Naive thymus-derived CD4-positive, alpha-beta T cell (primary cell): ENCODE measurements at regions of chr12 and their contacts with region 1.

Region 1: GRCh38 chr12:51217968-51218606 is at the start of gene POU6F1:
- DNase-seq: peak; percentile 64 to 81 (median 76)
- ATAC-seq: peak; percentile 88
- H3K4me3 ChIP-seq: peak within 1 kb of the TSS; percentile 90
- H3K4me3 Mint-ChIP-seq: peak within 1 kb of the TSS; percentile 82 to 98 (median 95)
- H3K27ac ChIP-seq: peak within 1 kb of the TSS; percentile 98
- H3K27ac Mint-ChIP-seq: peak within 1 kb of the TSS; percentile 83 to 98 (median 96)
- H3K4me1 ChIP-seq: peaks cover 10% of the 10 kb centered on the region in 2 donors
- H3K4me1 Mint-ChIP-seq: peaks cover 13 to 43% (median 33%) of the 10 kb centered on the region in 7 donors
- H3K27me3 ChIP-seq: no peaks in the 10 kb centered on the region
- H3K27me3 Mint-ChIP-seq: no peaks in the 10 kb centered on the region
- total RNA-seq, gene POU6F1: 5.1 to 85.5 (median 33.5) TPM

Region 2: DNA sequence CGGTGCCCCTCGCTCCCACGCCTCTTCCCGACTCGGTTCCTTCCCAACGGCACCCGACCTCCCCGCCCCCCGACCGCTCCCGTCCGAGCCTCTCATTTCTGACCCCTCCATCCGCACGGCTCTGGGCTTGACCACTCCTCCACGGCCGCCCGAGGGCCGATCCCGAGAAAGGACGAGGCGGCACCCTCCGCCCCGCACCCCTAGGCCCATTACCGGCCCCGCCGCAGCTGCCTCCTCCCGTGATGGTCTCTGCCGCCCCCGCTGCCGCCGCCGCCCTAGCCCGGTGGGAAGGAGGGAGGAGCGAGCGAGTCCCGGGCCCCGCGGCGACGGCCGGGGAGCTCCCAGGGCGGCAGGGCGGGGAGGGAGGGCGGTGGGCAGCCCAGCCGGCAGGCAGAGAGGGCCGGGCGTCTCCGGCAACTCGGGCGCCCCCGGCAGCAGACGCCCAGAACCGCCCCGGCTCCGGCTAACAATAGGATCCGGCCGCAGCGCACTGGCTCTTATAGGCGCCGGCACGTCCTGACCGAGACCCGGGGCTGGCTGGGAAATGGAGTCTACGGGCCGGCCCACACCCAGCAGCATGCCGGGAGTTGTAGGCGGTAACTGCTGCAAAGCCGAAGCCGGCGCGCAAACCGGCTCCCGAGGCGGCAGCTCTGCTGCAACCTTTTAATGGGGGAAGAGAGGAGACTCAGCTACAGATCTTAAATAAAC is 134.8 kb before region 1 on chr12 and contains the start of gene CSRNP2:
- CTCF ChIA-PET with region 1: no interaction called
- POLR2A ChIA-PET with region 1: interaction called, 13 read pairs
- intact Hi-C with region 1: loop called in 1 of 2 experiments (anchors 1 kb)
- DNase-seq: peak; percentile 90 to 95 (median 94)
- ATAC-seq: peak; percentile 100
- H3K4me3 ChIP-seq: peak within 1 kb of the TSS; percentile 78
- H3K4me3 Mint-ChIP-seq: peak within 1 kb of the TSS; percentile 89 to 100 (median 96)
- H3K27ac ChIP-seq: peak within 1 kb of the TSS; percentile 97
- H3K27ac Mint-ChIP-seq: peak within 1 kb of the TSS; percentile 89 to 98 (median 93)
- H3K4me1 ChIP-seq: peaks cover 7% of the 10 kb centered on the region in 2 donors
- H3K4me1 Mint-ChIP-seq: peaks cover 22 to 46% (median 43%) of the 10 kb centered on the region in 7 donors
- H3K27me3 ChIP-seq: no peaks in the 10 kb centered on the region
- H3K27me3 Mint-ChIP-seq: no peaks in the 10 kb centered on the region
- total RNA-seq, gene CSRNP2: 20.0 to 38.7 (median 23.4) TPM

Region 3: DNA sequence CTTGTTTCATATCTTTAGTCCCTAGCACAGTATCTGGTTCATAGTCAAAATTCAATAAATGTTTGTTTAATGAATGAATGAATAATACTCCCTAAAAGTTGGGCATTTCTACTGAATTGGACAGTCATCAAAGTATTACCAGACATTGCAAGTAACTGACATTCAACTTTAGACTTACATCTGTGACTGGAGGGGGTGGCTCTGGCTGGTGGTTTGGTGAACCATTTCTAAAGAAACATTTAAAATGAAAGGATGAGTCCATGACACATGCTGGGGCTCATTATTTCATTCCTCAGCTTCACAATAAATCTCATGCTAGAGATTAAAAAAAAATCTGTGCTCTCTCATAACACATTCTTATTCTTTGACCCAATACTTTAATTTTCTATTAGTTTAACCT is 114.1 kb before region 1 on chr12:
- CTCF ChIA-PET with region 1: no interaction called
- POLR2A ChIA-PET with region 1: no interaction called
- intact Hi-C with region 1: no loop called
- DNase-seq: no peak
- ATAC-seq: no peak
- H3K4me3 ChIP-seq: no peak overlapping the region
- H3K4me3 Mint-ChIP-seq: no peak overlapping the region
- H3K27ac ChIP-seq: no peak overlapping the region
- H3K27ac Mint-ChIP-seq: peak overlapping the region in 1 of 9 donors; percentile 9
- H3K4me1 ChIP-seq: no peaks in the 10 kb centered on the region
- H3K4me1 Mint-ChIP-seq: no peaks in the 10 kb centered on the region
- H3K27me3 ChIP-seq: no peaks in the 10 kb centered on the region
- H3K27me3 Mint-ChIP-seq: no peaks in the 10 kb centered on the region

Region 4: GRCh38 chr12:51183816-51184215 is 34.3 kb before region 1 on chr12:
- CTCF ChIA-PET with region 1: no interaction called
- POLR2A ChIA-PET with region 1: no interaction called
- intact Hi-C with region 1: no loop called
- DNase-seq: no peak
- ATAC-seq: no peak
- H3K4me3 ChIP-seq: no peak overlapping the region
- H3K4me3 Mint-ChIP-seq: no peak overlapping the region
- H3K27ac ChIP-seq: no peak overlapping the region
- H3K27ac Mint-ChIP-seq: no peak overlapping the region
- H3K4me1 ChIP-seq: no peaks in the 10 kb centered on the region
- H3K4me1 Mint-ChIP-seq: peaks cover 0 to 19% (median 0%) of the 10 kb centered on the region in 7 donors
- H3K27me3 ChIP-seq: no peaks in the 10 kb centered on the region
- H3K27me3 Mint-ChIP-seq: no peaks in the 10 kb centered on the region

Region 5: GRCh38 chr12:51202718-51203117 is 15.4 kb before region 1 on chr12:
- CTCF ChIA-PET with region 1: interaction called, 4 read pairs
- POLR2A ChIA-PET with region 1: interaction called, 5 read pairs
- intact Hi-C with region 1: loop called in 1 of 2 experiments (anchors 2 kb)
- DNase-seq: peak in 7 of 9 donors; percentile 28 to 67 (median 36)
- ATAC-seq: peak; percentile 66
- H3K4me3 ChIP-seq: no peak overlapping the region
- H3K4me3 Mint-ChIP-seq: peak overlapping the region in 8 of 10 donors; percentile 20 to 54 (median 29)
- H3K27ac ChIP-seq: peak overlapping the region; percentile 37
- H3K27ac Mint-ChIP-seq: peak overlapping the region; percentile 14 to 94 (median 88)
- H3K4me1 ChIP-seq: peaks cover 0 to 12% of the 10 kb centered on the region in 2 donors
- H3K4me1 Mint-ChIP-seq: peaks cover 0 to 36% (median 13%) of the 10 kb centered on the region in 7 donors
- H3K27me3 ChIP-seq: no peaks in the 10 kb centered on the region
- H3K27me3 Mint-ChIP-seq: no peaks in the 10 kb centered on the region

Region 6: GRCh38 chr12:51246254-51246853 is 28.3 kb after region 1 on chr12:
- CTCF ChIA-PET with region 1: interaction called, 4 read pairs
- POLR2A ChIA-PET with region 1: interaction called, 128 read pairs
- intact Hi-C with region 1: no loop called
- DNase-seq: peak in 7 of 9 donors; percentile 41 to 73 (median 56)
- ATAC-seq: peak; percentile 80
- H3K4me3 ChIP-seq: peak overlapping the region; percentile 16
- H3K4me3 Mint-ChIP-seq: peak overlapping the region; percentile 0 to 86 (median 64)
- H3K27ac ChIP-seq: peak overlapping the region; percentile 66
- H3K27ac Mint-ChIP-seq: peak overlapping the region; percentile 83 to 95 (median 92)
- H3K4me1 ChIP-seq: peaks cover 29 to 44% of the 10 kb centered on the region in 2 donors
- H3K4me1 Mint-ChIP-seq: peaks cover 41 to 82% (median 66%) of the 10 kb centered on the region in 7 donors
- H3K27me3 ChIP-seq: no peaks in the 10 kb centered on the region
- H3K27me3 Mint-ChIP-seq: no peaks in the 10 kb centered on the region

Region 7: GRCh38 chr12:51326762-51327439 is 108.8 kb after region 1 on chr12:
- CTCF ChIA-PET with region 1: no interaction called
- POLR2A ChIA-PET with region 1: interaction called, 5 read pairs
- intact Hi-C with region 1: loop called in 1 of 2 experiments (anchors 5 kb)
- DNase-seq: peak in 2 of 9 donors; percentile 10 to 27
- ATAC-seq: peak; percentile 34
- H3K4me3 ChIP-seq: no peak overlapping the region
- H3K4me3 Mint-ChIP-seq: peak overlapping the region; percentile 49 to 85 (median 72)
- H3K27ac ChIP-seq: peak overlapping the region; percentile 60
- H3K27ac Mint-ChIP-seq: peak overlapping the region; percentile 76 to 96 (median 93)
- H3K4me1 ChIP-seq: peaks cover 51 to 67% of the 10 kb centered on the region in 2 donors
- H3K4me1 Mint-ChIP-seq: peaks cover 45 to 92% (median 67%) of the 10 kb centered on the region in 7 donors
- H3K27me3 ChIP-seq: no peaks in the 10 kb centered on the region
- H3K27me3 Mint-ChIP-seq: no peaks in the 10 kb centered on the region

Region 8: GRCh38 chr12:52346593-52346992 is 1128.5 kb after region 1 on chr12:
- CTCF ChIA-PET with region 1: no interaction called
- POLR2A ChIA-PET with region 1: no interaction called
- intact Hi-C with region 1: no loop called
- DNase-seq: no peak
- ATAC-seq: no peak
- H3K4me3 ChIP-seq: no peak overlapping the region
- H3K4me3 Mint-ChIP-seq: no peak overlapping the region
- H3K27ac ChIP-seq: no peak overlapping the region
- H3K27ac Mint-ChIP-seq: no peak overlapping the region
- H3K4me1 ChIP-seq: peaks cover 8 to 9% of the 10 kb centered on the region in 2 donors
- H3K4me1 Mint-ChIP-seq: peaks cover under 1 to 11% (median 8%) of the 10 kb centered on the region in 7 donors
- H3K27me3 ChIP-seq: no peaks in the 10 kb centered on the region
- H3K27me3 Mint-ChIP-seq: peaks cover 0 to 14% (median 5%) of the 10 kb centered on the region in 5 donors